Activated B cell treated with CpG ODN at 0.5 μM for 24 hours (primary cell): ENCODE measurements at regions of chr2 and their contacts with region 1.

Region 1: DNA sequence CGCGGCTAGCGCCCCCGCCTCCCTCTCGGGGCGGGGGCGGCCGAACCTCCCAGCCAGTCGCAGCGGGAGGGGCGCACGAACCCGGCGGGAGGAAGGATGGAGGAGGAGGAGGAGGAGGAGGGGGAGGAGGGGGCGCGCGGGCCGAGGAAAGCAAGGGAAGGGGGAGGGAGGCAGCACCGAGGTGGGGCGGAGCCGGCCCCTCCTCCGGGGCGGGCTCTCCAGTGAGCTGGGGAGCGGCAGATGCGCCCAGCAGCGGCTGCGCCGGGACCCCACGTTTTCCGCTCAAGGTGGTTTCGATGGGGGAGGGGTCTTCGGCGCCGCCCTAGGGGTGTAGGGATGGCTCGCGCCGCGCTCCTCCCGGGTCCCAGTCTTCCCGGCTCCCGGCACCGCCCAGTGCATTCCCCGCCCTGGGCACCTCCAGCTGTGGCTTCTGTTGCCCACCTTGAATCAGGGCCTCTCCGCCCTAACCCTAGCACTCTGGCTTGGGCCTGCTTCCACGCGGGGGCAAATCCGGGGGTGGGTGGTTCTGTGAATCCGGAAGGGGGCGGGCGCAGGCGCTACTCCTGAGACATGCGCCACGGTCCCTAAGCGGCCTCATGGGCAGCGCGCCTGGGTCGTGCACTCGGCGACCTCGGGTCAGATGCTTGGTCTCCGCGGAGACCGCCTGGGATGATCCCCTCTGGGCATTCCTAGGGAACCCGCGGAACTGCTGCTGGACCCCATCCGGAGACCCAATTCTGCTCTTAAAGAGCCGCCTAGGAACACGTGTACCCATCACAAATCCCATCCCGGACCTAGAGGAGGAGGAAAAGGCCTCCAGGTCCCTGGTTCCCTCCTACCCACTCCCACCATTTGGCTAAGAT is at the start of gene FBXO41:
- DNase-seq: peak; percentile 67
- ATAC-seq: peak; percentile 73
- H3K4me3 Mint-ChIP-seq: peak within 1 kb of the TSS; percentile 82
- H3K27ac Mint-ChIP-seq: peak within 1 kb of the TSS; percentile 89
- H3K4me1 Mint-ChIP-seq: peaks cover 36% of the 10 kb centered on the region
- H3K27me3 Mint-ChIP-seq: no peaks in the 10 kb centered on the region
- CTCF ChIP-seq: no peak
- total RNA-seq, gene FBXO41: 21.4 and 25.7 TPM in 2 replicates

Region 2: GRCh38 chr2:72185206-72185605 is 1099.3 kb before region 1 on chr2:
- CTCF ChIA-PET with region 1: no interaction called
- POLR2A ChIA-PET with region 1: no interaction called
- intact Hi-C with region 1: no loop called
- DNase-seq: no peak
- ATAC-seq: no peak
- H3K4me3 Mint-ChIP-seq: no peak overlapping the region
- H3K27ac Mint-ChIP-seq: no peak overlapping the region
- H3K4me1 Mint-ChIP-seq: no peaks in the 10 kb centered on the region
- H3K27me3 Mint-ChIP-seq: no peaks in the 10 kb centered on the region
- CTCF ChIP-seq: no peak

Region 3: DNA sequence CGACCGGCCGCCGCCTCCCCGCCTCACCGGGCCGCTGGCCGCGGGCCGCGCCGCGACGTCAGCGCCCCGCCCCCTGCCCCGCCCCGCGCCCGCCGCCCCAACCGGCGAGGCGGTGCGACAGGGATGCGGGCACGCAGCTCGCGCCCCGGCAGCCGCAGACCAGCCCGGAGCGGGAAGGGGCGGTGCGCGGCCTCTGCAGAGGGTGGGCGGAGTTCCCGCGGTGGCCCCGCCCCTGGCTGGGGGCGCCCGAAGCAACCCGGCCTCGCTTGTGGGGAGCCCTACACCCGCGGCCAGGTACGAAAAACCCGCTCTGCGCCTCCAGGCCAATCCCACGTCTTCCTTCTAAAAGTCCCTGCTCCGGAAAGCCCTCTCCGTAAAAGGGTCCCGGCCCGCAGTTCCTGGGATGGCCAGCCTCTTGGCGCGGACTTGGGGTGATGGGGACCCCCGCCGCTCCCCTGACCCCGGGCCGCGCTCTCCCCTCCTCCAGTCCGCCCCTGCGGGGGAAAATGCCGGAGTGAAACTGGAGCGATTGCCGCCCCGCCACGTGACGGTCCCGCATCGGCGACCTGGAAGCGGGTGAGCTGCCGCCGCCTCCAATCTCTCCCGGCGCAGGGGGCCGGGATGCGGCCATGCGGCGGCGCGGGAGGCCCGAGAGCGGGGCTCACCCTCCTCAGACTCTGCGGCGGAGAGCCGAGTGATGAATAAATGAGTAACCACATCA is 171.5 kb before region 1 on chr2 and contains the start of gene RAB11FIP5:
- CTCF ChIA-PET with region 1: no interaction called
- POLR2A ChIA-PET with region 1: interaction called, 3 read pairs
- intact Hi-C with region 1: loop called (anchors 2 kb)
- DNase-seq: peak; percentile 75
- ATAC-seq: peak; percentile 91
- H3K4me3 Mint-ChIP-seq: peak within 1 kb of the TSS; percentile 77
- H3K27ac Mint-ChIP-seq: peak within 1 kb of the TSS; percentile 59
- H3K4me1 Mint-ChIP-seq: peaks cover 11% of the 10 kb centered on the region
- H3K27me3 Mint-ChIP-seq: no peaks in the 10 kb centered on the region
- CTCF ChIP-seq: no peak
- total RNA-seq, gene RAB11FIP5: 3.2 and 3.5 TPM in 2 replicates

Region 4: DNA sequence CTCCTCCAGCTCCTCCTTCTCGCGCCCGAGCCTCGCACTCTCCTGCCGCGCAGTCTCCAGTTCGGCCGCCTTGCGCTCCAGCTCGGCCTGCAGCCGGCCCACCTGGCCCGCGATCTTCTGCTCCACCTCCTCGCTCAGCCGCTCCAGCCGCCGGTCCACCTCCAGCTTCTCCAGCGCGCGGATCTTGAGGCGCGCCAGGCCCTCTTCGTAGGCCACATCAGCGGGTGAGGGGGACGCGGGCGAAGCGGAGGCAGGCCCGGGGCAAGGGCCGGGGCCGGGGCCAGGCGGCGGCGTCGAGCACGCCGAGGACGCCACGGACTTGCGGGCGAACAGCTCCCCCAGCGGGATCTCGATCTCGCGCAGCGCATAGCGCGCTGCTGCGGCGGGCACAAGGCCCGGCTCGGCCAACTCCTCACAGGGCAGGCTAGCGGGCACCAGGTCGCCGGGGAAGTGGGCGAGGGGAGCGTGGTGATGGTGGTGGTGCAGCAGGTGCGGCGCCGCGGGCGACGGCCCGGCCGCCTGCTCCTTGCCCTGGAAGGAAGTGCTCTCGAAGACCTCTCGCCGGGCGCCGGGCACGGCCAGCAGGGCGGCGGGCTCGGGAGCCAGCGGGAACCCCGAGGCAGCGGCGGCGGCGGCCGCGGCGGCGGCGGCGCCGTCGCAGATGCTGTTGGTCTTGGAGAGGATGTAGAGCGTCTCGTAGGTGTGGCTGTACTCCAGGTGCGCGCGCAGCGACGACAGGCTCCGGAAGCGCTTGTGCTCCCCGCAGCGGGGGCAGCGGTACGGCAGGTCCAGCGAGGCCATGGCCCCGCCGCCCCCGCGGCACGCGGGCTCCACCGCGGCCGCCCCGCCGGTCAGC is 15.5 kb before region 1 on chr2:
- CTCF ChIA-PET with region 1: interaction called, 3 read pairs
- POLR2A ChIA-PET with region 1: interaction called, 5 read pairs
- intact Hi-C with region 1: loop called (anchors 1 kb)
- DNase-seq: peak; percentile 54
- ATAC-seq: peak; percentile 92
- H3K4me3 Mint-ChIP-seq: peak overlapping the region; percentile 44
- H3K27ac Mint-ChIP-seq: no peak overlapping the region
- H3K4me1 Mint-ChIP-seq: peaks cover 18% of the 10 kb centered on the region
- H3K27me3 Mint-ChIP-seq: no peaks in the 10 kb centered on the region
- CTCF ChIP-seq: no peak

Region 5: DNA sequence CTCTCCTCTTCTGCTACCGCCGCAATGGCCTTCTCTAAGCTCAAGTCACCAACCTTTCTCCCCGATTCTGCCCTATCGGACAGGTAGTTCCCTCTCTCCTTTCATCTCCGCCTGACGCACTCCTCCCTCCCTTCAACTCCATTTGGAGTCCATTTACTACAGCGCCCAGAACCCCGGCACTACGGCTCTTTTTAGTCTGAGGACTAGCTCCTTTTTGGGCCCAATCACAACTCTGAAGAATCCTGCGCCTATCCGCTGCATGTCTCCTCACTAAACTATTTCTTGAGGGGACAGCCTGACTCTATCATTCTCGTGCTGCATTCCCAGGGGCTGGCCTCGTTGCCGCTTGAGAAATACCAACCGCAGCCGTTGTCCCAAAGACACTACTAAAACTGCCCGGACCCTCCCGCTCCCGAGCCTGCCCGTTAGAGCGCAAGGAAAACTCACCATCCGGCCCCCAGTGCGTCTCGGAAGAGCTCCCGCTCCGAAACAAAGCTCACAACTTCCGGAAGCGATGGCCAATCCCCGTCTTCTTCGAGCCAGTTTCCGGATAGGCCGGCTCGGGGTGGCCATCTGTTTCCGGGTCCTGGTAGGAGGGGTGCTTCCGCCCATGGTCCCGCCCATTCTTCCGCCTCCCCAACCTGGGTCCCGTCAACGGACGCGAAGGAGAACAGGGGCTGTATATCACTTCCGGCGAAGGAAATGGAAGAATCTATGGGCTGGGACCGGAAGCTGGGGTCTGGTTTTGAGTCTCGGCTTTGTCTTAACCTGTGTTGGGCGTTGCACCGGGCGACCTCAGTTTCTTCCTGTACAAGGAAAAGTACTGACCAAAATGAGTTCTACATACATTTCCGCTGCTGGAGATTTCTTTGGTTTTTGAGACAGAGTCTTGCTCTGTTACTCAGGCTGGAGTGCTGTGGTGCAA is 452.6 kb after region 1 on chr2 and contains the start of gene TPRKB:
- CTCF ChIA-PET with region 1: no interaction called
- POLR2A ChIA-PET with region 1: interaction called, 3 read pairs
- intact Hi-C with region 1: loop called (anchors 10 kb)
- DNase-seq: peak; percentile 85
- ATAC-seq: peak; percentile 98
- H3K4me3 Mint-ChIP-seq: peak within 1 kb of the TSS; percentile 94
- H3K27ac Mint-ChIP-seq: peak within 1 kb of the TSS; percentile 90
- H3K4me1 Mint-ChIP-seq: peaks cover 18% of the 10 kb centered on the region
- H3K27me3 Mint-ChIP-seq: no peaks in the 10 kb centered on the region
- CTCF ChIP-seq: no peak
- total RNA-seq, gene TPRKB: 26.9 and 27.1 TPM in 2 replicates